Activated CD4-positive, alpha-beta memory T cell treated with anti-CD3 and anti-CD28 coated beads, Interleukin-2, amount 10 ng/mL, durations not matched to agents 7 days and 5 days (primary cell): ENCODE measurements at regions of chr17 and their contacts with region 1.

Region 1: GRCh38 chr17:16589097-16589969 is 20.3 kb upstream of the ZNF287 start:
- DNase-seq: peak; percentile 92
- H3K4me3 Mint-ChIP-seq: peak overlapping the region; percentile 65
- H3K27ac Mint-ChIP-seq: no peak overlapping the region
- H3K4me1 Mint-ChIP-seq: peaks cover 7% of the 10 kb centered on the region
- H3K27me3 Mint-ChIP-seq: peaks cover 32% of the 10 kb centered on the region

Region 2: DNA sequence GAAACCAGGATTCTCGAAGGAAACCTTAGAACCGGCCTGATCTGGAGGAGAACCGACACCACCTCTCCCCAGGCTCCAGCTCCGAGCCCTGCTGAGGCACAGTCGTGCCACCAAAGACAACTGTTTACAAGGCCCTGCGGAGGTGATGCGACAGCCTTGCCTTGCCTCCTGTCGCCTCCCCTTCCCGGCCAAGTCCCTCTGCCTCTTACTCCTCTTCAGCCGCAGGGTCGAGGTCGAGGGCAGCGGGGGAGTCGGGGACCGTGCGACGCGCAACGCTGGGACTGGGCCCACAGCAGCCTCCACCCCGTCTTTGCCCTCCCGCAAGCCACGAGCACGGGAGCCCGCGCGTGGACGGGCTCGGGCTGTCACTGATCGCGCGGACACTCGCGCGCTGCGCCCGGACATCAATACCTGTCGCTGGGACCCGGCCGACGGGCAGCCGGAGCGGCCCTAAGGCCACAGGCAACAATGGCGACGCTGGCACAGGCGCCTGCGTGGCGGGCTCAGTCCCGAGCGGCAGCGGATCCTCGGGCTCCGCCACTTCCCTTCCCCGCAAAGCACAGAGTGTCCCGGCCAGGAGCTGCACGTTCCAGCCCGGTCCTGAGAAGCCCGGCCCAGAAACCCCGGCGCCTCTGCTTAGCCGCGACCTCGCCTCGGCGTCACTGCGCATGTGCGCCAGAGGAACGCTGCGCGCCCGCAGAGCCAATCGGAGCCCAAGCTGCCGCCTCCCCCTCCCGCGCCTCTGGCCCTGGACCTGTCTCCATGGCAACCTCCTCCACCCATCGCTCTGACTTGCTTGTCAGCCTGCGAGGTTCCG is 20.6 kb before region 1 on chr17 and contains the start of gene ZNF287:
- CTCF ChIA-PET with region 1: interaction called, 14 read pairs
- POLR2A ChIA-PET with region 1: interaction called, 3 read pairs
- DNase-seq: peak; percentile 90
- H3K4me3 Mint-ChIP-seq: peak within 1 kb of the TSS; percentile 81
- H3K27ac Mint-ChIP-seq: no peak within 1 kb of the TSS
- H3K4me1 Mint-ChIP-seq: peaks cover 19% of the 10 kb centered on the region
- H3K27me3 Mint-ChIP-seq: peaks cover 2% of the 10 kb centered on the region
- total RNA-seq, gene ZNF287: 7.4 TPM